Heart left ventricle (tissue), 16 donors: ENCODE measurements at regions of chr9 and their contacts with region 1.

Region 1: GRCh38 chr9:110452227-110452801 is 114.7 kb upstream of the TXNDC8 start:
- DNase-seq: no peak
- ATAC-seq: no peak
- H3K4me3 ChIP-seq: no peak overlapping the region
- H3K27ac ChIP-seq: no peak overlapping the region
- H3K4me1 ChIP-seq: no peaks in the 10 kb centered on the region
- H3K27me3 ChIP-seq: no peaks in the 10 kb centered on the region
- CTCF ChIP-seq: peak; percentile 28 to 56 (median 38)
- POLR2A ChIP-seq: no peak

Region 2: DNA sequence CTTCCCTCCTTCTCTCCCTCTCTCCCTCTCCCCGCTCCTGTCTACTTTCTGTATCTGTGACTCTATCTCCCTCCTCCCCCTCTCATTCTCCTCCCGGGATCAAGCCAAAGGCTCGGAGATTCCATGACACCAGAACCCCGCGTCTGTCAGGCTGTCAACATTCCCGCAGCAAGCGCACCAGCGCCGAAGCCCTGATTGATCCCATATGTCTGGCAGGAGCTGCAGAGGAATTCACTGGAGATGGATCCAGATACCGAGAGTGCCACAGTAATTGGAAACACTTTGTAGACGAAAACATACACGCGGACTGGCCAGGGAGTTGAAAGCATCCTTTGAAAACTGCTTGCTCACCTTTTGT is 127.5 kb after region 1 on chr9:
- intact Hi-C with region 1: loop called in 5 of 10 experiments (anchors 5 to 10 kb)
- DNase-seq: peak in 4 of 5 donors; percentile 32 to 60 (median 38)
- ATAC-seq: peak in 3 of 4 donors; percentile 4 to 23 (median 23)
- H3K4me3 ChIP-seq: peak overlapping the region; percentile 34 to 76 (median 61)
- H3K27ac ChIP-seq: peak overlapping the region; percentile 64 to 88 (median 76)
- H3K4me1 ChIP-seq: peaks cover 0 to 18% (median 5%) of the 10 kb centered on the region in 12 donors
- H3K27me3 ChIP-seq: peaks cover 4 to 63% (median 22%) of the 10 kb centered on the region in 9 donors
- CTCF ChIP-seq: no peak
- POLR2A ChIP-seq: no peak

Region 3: DNA sequence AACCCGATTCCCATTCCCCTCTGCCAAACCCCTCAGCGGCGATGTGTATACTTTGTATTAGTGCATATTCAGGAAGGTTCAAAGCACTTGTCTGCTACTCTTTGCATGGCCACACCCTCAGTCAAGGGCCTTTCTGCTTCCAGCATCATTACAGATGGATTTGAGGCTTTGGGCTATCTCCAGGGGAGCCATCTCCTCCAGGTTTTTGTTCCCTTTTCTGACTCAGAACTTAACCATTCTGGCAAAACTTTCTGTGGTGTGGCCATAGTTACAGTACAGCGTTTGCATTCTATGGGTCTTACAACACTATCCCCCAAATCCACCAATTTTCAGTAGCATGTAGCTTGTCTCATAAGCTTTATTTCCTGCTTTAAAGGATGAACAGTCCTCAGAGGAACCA is 163.2 kb after region 1 on chr9:
- intact Hi-C with region 1: loop called in 9 of 10 experiments (anchors 5 to 10 kb)
- DNase-seq: no peak
- ATAC-seq: no peak
- H3K4me3 ChIP-seq: no peak overlapping the region
- H3K27ac ChIP-seq: no peak overlapping the region
- H3K4me1 ChIP-seq: peaks cover 0 to 4% (median 0%) of the 10 kb centered on the region in 12 donors
- H3K27me3 ChIP-seq: no peaks in the 10 kb centered on the region
- CTCF ChIP-seq: no peak
- POLR2A ChIP-seq: no peak

Region 4: GRCh38 chr9:110623462-110624025 is 171.2 kb after region 1 on chr9:
- intact Hi-C with region 1: loop called in 9 of 10 experiments (anchors 5 to 10 kb)
- DNase-seq: no peak
- ATAC-seq: peak in 2 of 4 donors; percentile 38 to 39
- H3K4me3 ChIP-seq: no peak overlapping the region
- H3K27ac ChIP-seq: no peak overlapping the region
- H3K4me1 ChIP-seq: no peaks in the 10 kb centered on the region
- H3K27me3 ChIP-seq: no peaks in the 10 kb centered on the region
- CTCF ChIP-seq: peak; percentile 44 to 80 (median 68)
- POLR2A ChIP-seq: no peak

Region 5: GRCh38 chr9:111298731-111299598 is 846.7 kb after region 1 on chr9:
- intact Hi-C with region 1: loop called in 1 of 10 experiments (anchors 5 kb)
- DNase-seq: peak; percentile 20 to 69 (median 32)
- ATAC-seq: peak; percentile 74 to 87 (median 78)
- H3K4me3 ChIP-seq: peak overlapping the region in 3 of 12 donors; percentile 4 to 21 (median 19)
- H3K27ac ChIP-seq: peak overlapping the region in 10 of 12 donors; percentile 4 to 67 (median 29)
- H3K4me1 ChIP-seq: no peaks in the 10 kb centered on the region
- H3K27me3 ChIP-seq: peaks cover 0 to 6% (median 0%) of the 10 kb centered on the region in 9 donors
- CTCF ChIP-seq: peak; percentile 62 to 86 (median 79)
- POLR2A ChIP-seq: no peak